ENCODE measurements at regions of chr3 and their contacts with region 1.

Region 1: DNA sequence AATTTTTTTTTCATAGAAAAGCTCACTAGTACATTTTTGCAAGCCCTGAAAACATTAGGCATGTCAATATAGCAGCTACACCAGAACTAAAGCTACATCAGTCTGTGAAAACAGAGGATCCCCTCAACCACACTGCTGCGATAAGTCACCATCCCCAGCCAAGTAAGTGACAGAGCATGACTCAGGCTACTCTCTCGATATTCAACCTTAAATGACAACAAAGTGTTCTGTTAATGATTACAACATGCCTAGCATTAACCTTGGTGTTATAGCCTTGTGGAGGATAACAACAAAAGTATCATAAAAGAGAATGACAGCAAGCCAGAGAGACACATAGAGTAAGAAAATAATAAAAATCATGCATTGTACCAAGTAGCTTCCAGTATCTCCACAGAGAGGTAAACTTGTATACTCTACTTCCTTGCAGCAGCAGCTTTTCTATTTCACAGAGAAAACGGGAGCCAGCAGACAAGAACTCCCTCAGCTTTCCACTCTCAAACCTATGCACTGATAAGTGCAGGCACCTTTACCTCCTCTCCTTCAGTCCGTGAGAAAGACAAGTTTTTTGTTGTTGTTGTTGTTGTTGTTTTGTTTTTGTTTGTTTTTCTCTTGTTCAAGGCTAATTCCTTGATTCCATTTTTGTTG is 76.6 kb downstream of the GBE1 start:
- DNase-seq: no peak
- ATAC-seq: no peak
- H3K4me3 ChIP-seq: no peak overlapping the region
- H3K27ac ChIP-seq: no peak overlapping the region
- H3K4me1 ChIP-seq: no peaks in the 10 kb centered on the region
- H3K27me3 ChIP-seq: no peaks in the 10 kb centered on the region
- CTCF ChIP-seq: no peak
- EP300 ChIP-seq: no peak
- POLR2A ChIP-seq: no peak
- RAD21 ChIP-seq: no peak

Region 2: DNA sequence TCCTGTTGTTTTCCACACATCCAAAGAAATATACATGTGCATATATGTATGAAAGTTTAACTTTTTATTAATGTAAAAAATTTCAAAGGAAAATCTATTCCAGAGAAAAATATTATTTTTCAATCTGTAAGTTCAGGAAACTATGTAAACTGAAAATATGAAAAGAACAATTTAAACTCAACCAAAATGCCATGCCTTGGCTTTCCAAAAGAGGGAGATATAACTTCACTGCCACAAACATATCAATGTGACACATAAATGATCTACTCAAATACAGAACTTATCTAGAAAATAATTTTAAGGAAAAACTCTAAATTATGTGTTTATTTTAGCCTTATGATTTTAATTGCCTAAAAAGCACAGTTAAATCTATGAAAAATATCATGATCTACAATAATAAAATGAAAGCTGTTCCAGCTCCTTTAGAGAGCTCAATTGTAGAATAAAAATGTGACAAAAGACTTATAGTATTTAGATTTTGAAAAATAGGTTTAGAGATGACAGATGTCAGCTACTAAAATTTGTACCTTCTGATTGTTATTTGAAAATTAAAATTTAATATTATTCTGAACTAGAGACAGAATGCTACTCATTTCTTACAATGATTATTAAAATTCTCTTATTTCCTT is 18.3 kb before region 1 on chr3:
- CTCF ChIA-PET with region 1: interaction called, 12 read pairs
- POLR2A ChIA-PET with region 1: no interaction called
- RAD21 ChIA-PET with region 1: interaction called, 3 read pairs
- SMC1A ChIA-PET with region 1: interaction called, 11 read pairs
- in situ Hi-C with region 1: no loop called
- intact Hi-C with region 1: no loop called
- DNase-seq: no peak
- ATAC-seq: peak; percentile 51; the same call in 2 of the 3 replicates
- H3K4me3 ChIP-seq: no peak overlapping the region
- H3K27ac ChIP-seq: no peak overlapping the region
- H3K4me1 ChIP-seq: no peaks in the 10 kb centered on the region
- H3K27me3 ChIP-seq: no peaks in the 10 kb centered on the region
- CTCF ChIP-seq: peak; percentile 52 to 72 (median 70); a peak in 5 of 6 replicates
- EP300 ChIP-seq: no peak
- POLR2A ChIP-seq: no peak
- RAD21 ChIP-seq: peak; percentile 75